Activated naive CD8-positive, alpha-beta T cell treated with anti-CD3 and anti-CD28 coated beads, Interleukin-2, amount 10 ng/mL, durations not matched to agents 7 days and 5 days (primary cell): ENCODE measurements at regions of chr10 and their contacts with region 1.

Region 1: GRCh38 chr10:103678178-103678526 is 177.2 kb downstream of the SH3PXD2A start:
- DNase-seq: peak; percentile 76
- ATAC-seq: peak; percentile 99
- H3K4me3 Mint-ChIP-seq: peak overlapping the region; percentile 83
- H3K27ac Mint-ChIP-seq: peak overlapping the region; percentile 88
- H3K4me1 Mint-ChIP-seq: peaks cover 12% of the 10 kb centered on the region
- H3K27me3 Mint-ChIP-seq: no peaks in the 10 kb centered on the region

Region 2: GRCh38 chr10:103659674-103660363 is 18.3 kb before region 1 on chr10:
- POLR2A ChIA-PET with region 1: interaction called, 13 read pairs
- DNase-seq: peak; percentile 64
- ATAC-seq: peak; percentile 88
- H3K4me3 Mint-ChIP-seq: peak overlapping the region; percentile 91
- H3K27ac Mint-ChIP-seq: peak overlapping the region; percentile 93
- H3K4me1 Mint-ChIP-seq: peaks cover 10% of the 10 kb centered on the region
- H3K27me3 Mint-ChIP-seq: no peaks in the 10 kb centered on the region